CD4-positive, alpha-beta memory T cell (primary cell): ENCODE measurements at regions of chr7 and their contacts with region 1.

Region 1: GRCh38 chr7:36487756-36488336 is 98.2 kb downstream of the ANLN start:
- DNase-seq: peak; percentile 43 to 61 (median 59)
- H3K4me3 ChIP-seq: no peak overlapping the region
- H3K4me3 Mint-ChIP-seq: no peak overlapping the region
- H3K27ac ChIP-seq: no peak overlapping the region
- H3K27ac Mint-ChIP-seq: no peak overlapping the region
- H3K4me1 ChIP-seq: no peaks in the 10 kb centered on the region
- H3K4me1 Mint-ChIP-seq: peaks cover 0 to 2% (median 0%) of the 10 kb centered on the region in 4 donors
- H3K27me3 ChIP-seq: no peaks in the 10 kb centered on the region
- H3K27me3 Mint-ChIP-seq: peaks cover 0 to 1% of the 10 kb centered on the region in 2 donors

Region 2: GRCh38 chr7:36473454-36474282 is 14.2 kb before region 1 on chr7:
- CTCF ChIA-PET with region 1: interaction called, 12 read pairs
- POLR2A ChIA-PET with region 1: no interaction called
- intact Hi-C with region 1: no loop called
- DNase-seq: no peak
- H3K4me3 ChIP-seq: no peak overlapping the region
- H3K4me3 Mint-ChIP-seq: no peak overlapping the region
- H3K27ac ChIP-seq: no peak overlapping the region
- H3K27ac Mint-ChIP-seq: no peak overlapping the region
- H3K4me1 ChIP-seq: peaks cover 5% of the 10 kb centered on the region
- H3K4me1 Mint-ChIP-seq: peaks cover 0 to 9% (median 3%) of the 10 kb centered on the region in 4 donors
- H3K27me3 ChIP-seq: no peaks in the 10 kb centered on the region
- H3K27me3 Mint-ChIP-seq: no peaks in the 10 kb centered on the region

Region 3: GRCh38 chr7:36986429-36987362 is 498.9 kb after region 1 on chr7:
- CTCF ChIA-PET with region 1: interaction called, 4 read pairs
- POLR2A ChIA-PET with region 1: no interaction called
- intact Hi-C with region 1: loop called (anchors 5 kb)
- DNase-seq: peak; percentile 30 to 50 (median 41)
- H3K4me3 ChIP-seq: no peak overlapping the region
- H3K4me3 Mint-ChIP-seq: no peak overlapping the region
- H3K27ac ChIP-seq: no peak overlapping the region
- H3K27ac Mint-ChIP-seq: peak overlapping the region in 3 of 7 donors; percentile 36 to 88 (median 82)
- H3K4me1 ChIP-seq: no peaks in the 10 kb centered on the region
- H3K4me1 Mint-ChIP-seq: peaks cover 25 to 43% (median 31%) of the 10 kb centered on the region in 4 donors
- H3K27me3 ChIP-seq: no peaks in the 10 kb centered on the region
- H3K27me3 Mint-ChIP-seq: no peaks in the 10 kb centered on the region

Region 4: GRCh38 chr7:37201003-37201875 is 713.4 kb after region 1 on chr7:
- CTCF ChIA-PET with region 1: interaction called, 86 read pairs
- POLR2A ChIA-PET with region 1: interaction called, 3 read pairs
- intact Hi-C with region 1: loop called (anchors 1 kb)
- DNase-seq: peak in 4 of 5 donors; percentile 10 to 28 (median 25)
- H3K4me3 ChIP-seq: no peak overlapping the region
- H3K4me3 Mint-ChIP-seq: no peak overlapping the region
- H3K27ac ChIP-seq: no peak overlapping the region
- H3K27ac Mint-ChIP-seq: peak overlapping the region in 3 of 7 donors; percentile 5 to 59 (median 22)
- H3K4me1 ChIP-seq: no peaks in the 10 kb centered on the region
- H3K4me1 Mint-ChIP-seq: peaks cover 4 to 12% (median 7%) of the 10 kb centered on the region in 4 donors
- H3K27me3 ChIP-seq: no peaks in the 10 kb centered on the region
- H3K27me3 Mint-ChIP-seq: no peaks in the 10 kb centered on the region